ENCODE measurements at regions of chr15 and their contacts with region 1.

Region 1: GRCh38 chr15:51649659-51650521 is 27.3 kb upstream of the DMXL2 start:
- DNase-seq: peak; percentile 66
- H3K4me3 ChIP-seq: no peak overlapping the region
- H3K27ac ChIP-seq: no peak overlapping the region
- H3K4me1 ChIP-seq: peaks cover 4% of the 10 kb centered on the region
- CTCF ChIP-seq: peak; percentile 94

Region 2: DNA sequence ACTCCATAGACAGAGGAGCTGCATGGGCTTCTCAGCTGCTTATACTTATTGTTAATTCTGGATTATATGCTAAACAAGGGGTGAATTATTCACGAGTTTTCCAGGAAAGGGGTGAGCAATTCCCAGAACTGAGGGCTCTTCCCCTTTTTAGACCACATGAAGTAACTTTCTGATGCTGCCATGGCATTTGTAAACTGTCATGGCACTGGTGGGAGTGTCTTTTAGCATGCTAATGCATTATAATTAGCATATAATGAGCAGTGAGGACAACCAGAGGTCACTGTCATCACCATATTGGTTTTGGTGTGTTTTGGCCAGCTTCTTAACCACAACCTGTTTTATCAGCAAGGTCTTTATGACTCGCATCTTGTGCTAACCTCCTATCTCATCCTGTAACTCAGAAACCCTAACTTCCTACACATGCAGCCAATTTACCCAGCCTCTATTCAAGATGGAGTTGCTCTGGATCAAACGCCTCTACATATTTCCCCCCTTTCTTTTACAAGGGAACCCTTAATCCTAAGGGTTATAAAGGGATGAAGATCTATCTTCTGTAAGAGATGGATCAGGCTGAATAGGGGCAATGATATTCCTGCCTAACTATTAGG is 15.2 kb before region 1 on chr15:
- CTCF ChIA-PET with region 1: no interaction called
- POLR2A ChIA-PET with region 1: no interaction called
- intact Hi-C with region 1: no loop called
- DNase-seq: no peak
- H3K4me3 ChIP-seq: no peak overlapping the region
- H3K27ac ChIP-seq: no peak overlapping the region
- H3K4me1 ChIP-seq: no peaks in the 10 kb centered on the region
- CTCF ChIP-seq: no peak

Region 3: GRCh38 chr15:51675234-51675633 is 25.3 kb after region 1 on chr15:
- CTCF ChIA-PET with region 1: no interaction called
- POLR2A ChIA-PET with region 1: no interaction called
- intact Hi-C with region 1: loop called (anchors 2 kb)
- DNase-seq: no peak
- H3K4me3 ChIP-seq: no peak overlapping the region
- H3K27ac ChIP-seq: no peak overlapping the region
- H3K4me1 ChIP-seq: no peaks in the 10 kb centered on the region
- CTCF ChIP-seq: no peak

Region 4: DNA sequence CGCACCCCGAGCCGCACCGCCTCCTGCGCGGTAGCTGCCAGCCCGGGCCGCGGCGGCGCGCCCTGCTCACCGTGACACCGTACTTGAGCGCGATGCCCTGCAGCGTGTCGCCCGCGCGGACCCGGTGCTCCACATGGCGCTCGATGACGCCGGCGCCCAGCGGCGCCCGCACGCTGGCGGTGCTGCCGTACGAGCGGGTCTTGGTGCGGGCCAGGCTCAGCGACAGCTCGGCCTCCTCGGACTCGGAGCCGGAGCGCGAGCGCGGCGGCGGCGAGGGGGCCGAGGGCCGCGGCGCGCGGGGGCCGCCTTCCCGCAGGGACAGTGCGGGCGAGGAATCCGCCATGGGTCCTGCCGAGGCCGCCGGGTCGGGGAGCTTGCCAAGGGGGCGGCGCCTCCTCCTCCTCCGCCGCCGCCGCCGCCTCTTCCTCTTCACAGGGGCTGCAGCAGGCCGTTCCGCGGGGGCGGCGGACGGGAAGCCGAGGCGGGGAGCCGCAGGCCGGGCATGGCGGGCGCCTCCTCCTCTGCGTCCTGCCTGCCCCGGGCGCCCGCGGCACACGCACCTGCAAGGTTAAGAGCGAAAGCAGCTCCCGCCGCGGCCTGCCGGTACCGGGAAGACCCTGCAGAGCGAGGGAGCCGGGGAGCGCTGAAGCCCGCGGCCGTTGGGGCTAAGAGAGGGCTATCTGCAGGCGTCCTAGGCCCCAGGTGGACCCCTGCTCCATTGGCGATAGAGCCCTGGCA is 87.6 kb after region 1 on chr15 and contains the start of gene LYSMD2:
- CTCF ChIA-PET with region 1: no interaction called
- POLR2A ChIA-PET with region 1: no interaction called
- intact Hi-C with region 1: loop called (anchors 10 kb)
- DNase-seq: peak; percentile 30
- H3K4me3 ChIP-seq: peak within 1 kb of the TSS; percentile 47
- H3K27ac ChIP-seq: no peak within 1 kb of the TSS
- H3K4me1 ChIP-seq: peaks cover 4% of the 10 kb centered on the region
- CTCF ChIP-seq: no peak
- total RNA-seq, gene LYSMD2: not detected in 2 replicates

Region 5: DNA sequence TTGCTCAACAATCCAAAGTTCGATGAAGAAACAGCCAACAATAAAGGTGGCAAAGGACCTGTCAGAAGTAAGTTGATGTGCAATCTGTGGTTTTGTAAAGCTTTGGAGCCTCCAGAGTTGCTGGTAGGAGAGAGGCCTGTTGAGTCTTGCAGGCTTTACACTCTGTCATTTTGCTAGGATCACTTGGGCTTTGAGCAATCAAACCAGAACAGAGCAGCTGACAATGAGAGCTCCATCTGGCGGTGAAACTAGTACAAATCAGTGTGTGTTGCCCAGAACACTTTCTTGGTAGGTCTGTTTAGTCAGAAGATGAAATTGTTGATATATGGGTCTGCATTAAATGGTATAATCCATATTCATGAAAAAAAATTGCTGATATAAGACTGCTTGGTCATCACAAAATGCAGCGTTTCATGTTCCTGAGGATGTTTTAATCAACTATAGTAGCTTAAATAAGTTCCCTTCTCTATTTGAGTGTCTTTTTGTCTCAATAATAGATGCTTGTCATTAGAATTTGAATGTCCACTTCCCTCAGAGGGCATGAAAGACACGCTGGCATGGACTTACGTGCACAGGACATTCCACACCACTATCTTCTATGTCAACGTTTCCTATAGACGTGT is 127.2 kb after region 1 on chr15:
- CTCF ChIA-PET with region 1: no interaction called
- POLR2A ChIA-PET with region 1: interaction called, 3 read pairs
- intact Hi-C with region 1: loop called (anchors 1 kb)
- DNase-seq: peak; percentile 72
- H3K4me3 ChIP-seq: no peak overlapping the region
- H3K27ac ChIP-seq: no peak overlapping the region
- H3K4me1 ChIP-seq: no peaks in the 10 kb centered on the region
- CTCF ChIP-seq: peak; percentile 90

Region 6: GRCh38 chr15:51907136-51907914 is 257.4 kb after region 1 on chr15:
- CTCF ChIA-PET with region 1: no interaction called
- POLR2A ChIA-PET with region 1: no interaction called
- intact Hi-C with region 1: loop called (anchors 10 kb)
- DNase-seq: no peak
- H3K4me3 ChIP-seq: no peak overlapping the region
- H3K27ac ChIP-seq: no peak overlapping the region
- H3K4me1 ChIP-seq: no peaks in the 10 kb centered on the region
- CTCF ChIP-seq: peak; percentile 37; the same call in 1 of the 2 replicates

Region 7: GRCh38 chr15:51935466-51936104 is 285.7 kb after region 1 on chr15:
- CTCF ChIA-PET with region 1: no interaction called
- POLR2A ChIA-PET with region 1: no interaction called
- intact Hi-C with region 1: no loop called
- DNase-seq: peak; percentile 78
- H3K4me3 ChIP-seq: peak overlapping the region; percentile 42
- H3K27ac ChIP-seq: peak overlapping the region; percentile 84
- H3K4me1 ChIP-seq: peaks cover 25% of the 10 kb centered on the region
- CTCF ChIP-seq: no peak

Measured in OCI-LY7 (cell line).